ENCODE measurements at regions of chr11 and their contacts with region 1.

Region 1: GRCh38 chr11:72141066-72141465 is 5.5 kb downstream of the FOLR3 start:
- DNase-seq: no peak
- ATAC-seq: no peak
- H3K4me3 Mint-ChIP-seq: no peak overlapping the region
- H3K27ac Mint-ChIP-seq: no peak overlapping the region
- H3K4me1 Mint-ChIP-seq: no peaks in the 10 kb centered on the region
- H3K27me3 Mint-ChIP-seq: peaks cover 27% of the 10 kb centered on the region
- CTCF ChIP-seq: no peak

Region 2: DNA sequence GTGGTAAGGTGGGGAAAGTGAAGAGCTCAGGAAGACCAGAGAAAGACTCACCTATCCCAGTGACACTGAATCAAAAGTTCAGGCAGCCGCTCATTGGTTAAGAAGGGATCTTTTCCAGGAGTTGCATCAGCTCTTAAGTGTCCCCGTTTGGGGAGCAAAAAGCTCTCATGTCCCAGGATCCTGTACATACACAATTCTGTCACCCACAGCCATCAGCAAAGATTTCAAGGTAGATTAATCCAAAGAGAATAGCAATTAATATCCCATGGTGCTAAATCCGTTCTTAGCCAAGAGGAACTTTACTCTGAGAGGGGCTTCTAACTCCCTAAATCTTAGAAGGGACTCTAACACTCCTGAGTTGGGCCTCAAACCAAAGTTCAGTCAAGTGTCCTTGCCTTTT is 13.8 kb after region 1 on chr11:
- CTCF ChIA-PET with region 1: interaction called, 12 read pairs
- POLR2A ChIA-PET with region 1: no interaction called
- DNase-seq: no peak
- ATAC-seq: no peak
- H3K4me3 Mint-ChIP-seq: no peak overlapping the region
- H3K27ac Mint-ChIP-seq: no peak overlapping the region
- H3K4me1 Mint-ChIP-seq: no peaks in the 10 kb centered on the region
- H3K27me3 Mint-ChIP-seq: peaks cover 12% of the 10 kb centered on the region
- CTCF ChIP-seq: no peak

Region 3: DNA sequence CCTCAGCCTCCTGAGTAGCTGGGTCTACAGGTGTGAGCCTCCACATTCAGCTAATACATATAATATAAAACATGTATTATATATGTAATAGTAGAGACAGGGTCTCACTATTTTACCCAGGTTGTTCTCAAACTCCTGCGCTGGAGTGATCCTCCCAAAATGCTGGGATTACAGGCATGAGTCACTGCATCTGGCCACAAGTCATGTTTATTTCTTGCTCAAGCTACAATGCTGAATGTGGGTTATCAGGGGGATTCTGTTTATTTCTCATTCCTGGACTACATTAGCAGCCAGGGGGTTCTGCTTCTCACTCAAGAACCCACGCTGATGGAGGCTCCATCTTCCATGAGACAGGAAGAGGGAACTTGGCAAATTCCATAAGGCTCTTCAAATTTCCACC is 19.3 kb after region 1 on chr11:
- CTCF ChIA-PET with region 1: interaction called, 12 read pairs
- POLR2A ChIA-PET with region 1: no interaction called
- DNase-seq: no peak
- ATAC-seq: no peak
- H3K4me3 Mint-ChIP-seq: no peak overlapping the region
- H3K27ac Mint-ChIP-seq: no peak overlapping the region
- H3K4me1 Mint-ChIP-seq: no peaks in the 10 kb centered on the region
- H3K27me3 Mint-ChIP-seq: peaks cover 23% of the 10 kb centered on the region
- CTCF ChIP-seq: no peak

Measured in WTC11 (cell line).